Calu3 (cell line): ENCODE measurements at regions of chr5 and their contacts with region 1.

Region 1: DNA sequence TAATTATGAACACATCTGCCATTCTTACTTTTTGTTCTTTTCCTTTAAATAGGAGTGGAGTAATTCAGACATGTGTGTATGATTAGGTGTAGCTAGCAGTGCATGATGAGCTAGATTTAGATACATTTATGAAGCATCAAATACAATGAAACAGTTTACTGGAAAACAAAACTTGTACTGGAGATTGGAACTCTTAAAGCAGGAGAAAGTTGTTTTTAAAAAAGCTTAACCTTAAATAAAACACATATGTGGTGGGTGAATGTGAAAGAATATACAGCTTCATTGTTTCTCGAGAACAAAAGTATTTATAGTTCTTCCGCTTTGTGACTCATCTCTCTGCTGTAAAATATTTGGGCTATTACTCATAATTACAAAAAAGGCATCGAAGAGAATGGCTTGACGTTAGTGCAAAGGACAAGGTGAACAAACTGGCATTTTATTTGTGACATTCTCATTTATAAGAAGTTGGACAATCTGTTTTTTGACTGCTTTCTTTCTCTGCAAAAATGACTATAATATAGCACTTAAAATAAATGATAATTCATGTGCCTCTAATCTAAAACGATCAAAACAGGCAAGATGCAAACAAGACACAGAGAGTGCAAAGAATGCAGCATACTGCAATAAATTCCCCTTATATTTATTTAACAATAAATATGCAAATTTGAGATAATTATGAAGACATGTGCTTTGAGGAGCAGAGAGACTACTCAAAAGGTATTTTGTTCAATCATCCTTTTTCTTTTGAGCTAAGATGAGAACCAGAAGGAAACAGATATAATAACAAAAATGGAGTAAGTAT is 478.8 kb downstream of the CETN3 start:
- DNase-seq: no peak
- H3K4me3 Mint-ChIP-seq: peak overlapping the region; percentile 26
- H3K27ac Mint-ChIP-seq: peak overlapping the region; percentile 81
- H3K4me1 Mint-ChIP-seq: peaks cover 39% of the 10 kb centered on the region
- H3K27me3 Mint-ChIP-seq: no peaks in the 10 kb centered on the region
- CTCF ChIP-seq: no peak

Region 2: DNA sequence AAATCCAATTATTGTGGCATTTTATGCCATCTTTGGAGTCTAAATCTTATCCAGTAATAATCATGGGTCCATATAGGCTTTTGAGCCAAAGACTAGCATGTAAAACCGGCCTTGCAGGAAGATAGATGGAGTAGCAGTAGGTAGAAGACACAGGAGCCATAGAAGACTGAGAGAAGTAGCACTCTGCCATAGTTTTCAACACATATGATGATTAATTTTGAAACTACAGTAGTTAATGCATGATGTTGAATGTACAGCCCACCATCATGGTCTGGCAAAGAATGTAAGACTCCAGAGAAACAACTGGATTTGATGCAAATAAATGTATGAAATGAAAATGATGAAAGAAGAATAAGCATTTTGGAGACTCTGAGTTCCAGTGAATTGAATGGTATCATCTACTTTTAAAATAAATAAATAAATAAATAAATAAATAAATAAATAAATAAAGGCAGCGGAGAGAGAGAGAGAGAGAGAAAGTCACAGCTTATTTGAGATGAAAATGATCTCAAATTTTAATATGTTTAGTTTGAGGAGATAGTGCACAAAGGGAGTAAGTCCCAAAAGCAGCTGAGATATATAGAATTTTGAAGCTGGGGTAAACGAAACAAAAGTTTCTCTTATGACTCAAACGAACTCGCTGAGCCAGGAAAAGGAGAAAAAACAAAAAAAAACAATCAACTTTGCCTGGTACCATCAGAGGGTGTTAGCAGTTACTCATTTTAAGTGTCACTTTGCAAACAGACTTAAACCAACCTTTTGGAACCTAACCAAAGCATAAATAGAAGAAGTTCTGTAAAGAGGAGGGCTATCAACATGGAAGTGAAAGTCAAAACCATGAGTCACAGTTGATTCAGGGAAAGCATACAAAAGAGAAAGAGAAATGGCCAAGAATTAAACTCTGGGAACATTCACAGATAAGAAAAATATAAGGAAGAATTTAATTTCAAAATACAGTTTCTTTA is 90.1 kb after region 1 on chr5:
- CTCF ChIA-PET with region 1: no interaction called
- intact Hi-C with region 1: loop called (anchors 5 kb)
- DNase-seq: peak; percentile 34
- H3K4me3 Mint-ChIP-seq: peak overlapping the region; percentile 60
- H3K27ac Mint-ChIP-seq: peak overlapping the region; percentile 97
- H3K4me1 Mint-ChIP-seq: peaks cover 38% of the 10 kb centered on the region
- H3K27me3 Mint-ChIP-seq: no peaks in the 10 kb centered on the region
- CTCF ChIP-seq: no peak